ENCODE measurements at regions of chr7 and their contacts with region 1.

Region 1: GRCh38 chr7:34091323-34091917 is 186.1 kb downstream of the BMPER start:
- DNase-seq: no peak
- H3K4me3 ChIP-seq: no peak overlapping the region
- CTCF ChIP-seq: peak; percentile 50

Region 2: DNA sequence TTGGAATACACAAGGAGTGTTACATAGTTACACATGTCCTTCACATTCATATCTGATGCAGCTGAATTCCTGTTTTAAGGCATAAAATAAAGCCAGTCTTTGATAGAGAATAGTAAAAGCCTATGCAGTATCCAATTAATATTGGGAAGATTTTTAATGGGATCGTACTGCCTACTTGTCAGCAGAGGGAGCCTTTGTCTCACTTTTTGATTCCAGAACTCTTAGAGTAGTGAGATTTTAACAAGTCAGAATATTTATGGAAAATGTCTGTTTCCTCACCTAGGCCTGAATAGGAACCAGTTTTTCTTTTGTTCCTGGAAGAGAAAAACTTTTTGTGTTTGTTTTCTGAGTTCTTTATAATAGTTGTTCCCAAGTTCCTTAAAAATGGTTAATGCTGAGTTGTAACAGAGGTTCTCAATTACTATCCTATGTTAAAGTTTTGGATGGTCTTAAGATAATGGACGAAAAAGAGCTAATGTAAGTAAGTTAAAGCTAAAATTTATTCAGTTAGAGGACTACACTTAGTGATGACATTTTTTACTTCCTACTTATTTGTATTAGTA is 848.0 kb before region 1 on chr7:
- CTCF ChIA-PET with region 1: interaction called, 17 read pairs
- POLR2A ChIA-PET with region 1: no interaction called
- DNase-seq: no peak
- H3K4me3 ChIP-seq: no peak overlapping the region
- CTCF ChIP-seq: peak; percentile 46

Region 3: GRCh38 chr7:34058801-34059489 is 32.5 kb before region 1 on chr7:
- CTCF ChIA-PET with region 1: interaction called, 21 read pairs
- POLR2A ChIA-PET with region 1: no interaction called
- DNase-seq: no peak
- H3K4me3 ChIP-seq: no peak overlapping the region
- CTCF ChIP-seq: no peak

Region 4: DNA sequence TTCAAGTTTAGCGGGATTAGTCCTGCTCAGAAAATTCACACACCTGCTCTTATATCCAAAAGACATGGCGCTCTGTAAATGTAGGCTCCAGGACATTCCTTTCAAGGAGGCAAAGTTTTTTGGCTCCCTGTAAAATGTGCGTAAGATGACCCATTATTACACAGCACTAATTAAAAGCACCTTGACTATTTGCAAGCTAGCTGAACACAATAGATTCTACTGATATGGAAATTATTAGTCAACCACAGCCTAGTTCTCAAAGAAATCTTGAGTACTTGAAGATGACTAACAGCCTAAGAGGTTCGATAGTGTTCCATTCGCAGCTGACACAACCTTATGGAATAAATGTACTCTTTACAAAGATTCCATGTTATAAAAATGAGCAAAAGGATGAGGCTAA is 10.9 kb before region 1 on chr7:
- CTCF ChIA-PET with region 1: interaction called, 24 read pairs
- POLR2A ChIA-PET with region 1: no interaction called
- DNase-seq: no peak
- H3K4me3 ChIP-seq: no peak overlapping the region
- CTCF ChIP-seq: no peak

Region 5: GRCh38 chr7:34165929-34166550 is 74.6 kb after region 1 on chr7:
- CTCF ChIA-PET with region 1: interaction called, 43 read pairs
- POLR2A ChIA-PET with region 1: no interaction called
- DNase-seq: no peak
- H3K4me3 ChIP-seq: no peak overlapping the region
- CTCF ChIP-seq: peak; percentile 65